ENCODE measurements at regions of chr12 and their contacts with region 1.

Region 1: DNA sequence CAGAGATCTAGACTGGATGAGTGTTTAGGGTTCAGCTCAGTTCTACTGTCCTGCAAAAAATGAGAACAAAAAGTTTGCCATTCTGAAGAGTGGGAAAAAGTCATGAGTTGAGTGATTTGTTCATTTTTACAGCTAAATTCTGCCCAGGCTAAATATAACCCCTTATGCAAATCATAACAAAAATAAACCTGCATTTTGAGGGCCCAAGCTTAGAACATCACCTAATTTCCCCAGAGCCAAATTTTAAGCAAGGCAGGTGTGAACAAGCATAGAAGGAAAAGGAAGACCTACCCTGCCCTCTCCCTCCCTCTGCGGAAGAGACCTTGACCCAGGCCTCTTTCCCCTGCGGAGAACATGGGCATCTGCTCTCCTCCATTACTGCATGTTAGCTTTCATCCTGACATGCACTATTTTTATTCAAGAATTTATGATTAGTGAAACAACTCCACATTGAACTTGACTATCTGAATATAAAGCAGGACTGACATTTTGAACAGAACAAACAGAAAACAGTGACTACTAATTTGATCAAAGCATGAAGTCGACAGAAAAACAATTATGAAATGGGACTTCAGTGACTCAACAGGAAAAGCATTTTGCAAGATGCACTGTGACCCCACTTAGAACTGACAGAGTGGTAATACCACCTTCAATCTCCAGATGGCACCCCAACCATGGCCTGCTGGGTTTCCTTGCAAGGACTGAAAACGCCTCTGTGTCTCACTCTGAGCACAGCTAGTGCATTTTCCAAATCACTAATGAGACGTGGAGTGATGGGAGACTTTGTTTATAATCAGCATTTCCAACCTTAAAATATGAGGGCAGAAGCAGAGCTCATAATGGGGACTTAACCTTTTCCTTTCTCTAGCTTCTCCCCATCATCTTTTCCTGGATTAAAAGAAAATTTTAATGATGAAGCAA is 30.9 kb upstream of the SELPLG start:
- DNase-seq: peak; percentile 94 to 95
- H3K4me3 ChIP-seq: no peak overlapping the region
- CTCF ChIP-seq: peak in 1 of 3 donors; percentile 94
- POLR2A ChIP-seq: no peak

Region 2: GRCh38 chr12:108691175-108691997 is 26.8 kb after region 1 on chr12:
- intact Hi-C with region 1: no loop called
- DNase-seq: peak; percentile 97 to 98
- H3K4me3 ChIP-seq: no peak overlapping the region
- CTCF ChIP-seq: peak in 1 of 3 donors; percentile 86
- POLR2A ChIP-seq: no peak

Region 3: DNA sequence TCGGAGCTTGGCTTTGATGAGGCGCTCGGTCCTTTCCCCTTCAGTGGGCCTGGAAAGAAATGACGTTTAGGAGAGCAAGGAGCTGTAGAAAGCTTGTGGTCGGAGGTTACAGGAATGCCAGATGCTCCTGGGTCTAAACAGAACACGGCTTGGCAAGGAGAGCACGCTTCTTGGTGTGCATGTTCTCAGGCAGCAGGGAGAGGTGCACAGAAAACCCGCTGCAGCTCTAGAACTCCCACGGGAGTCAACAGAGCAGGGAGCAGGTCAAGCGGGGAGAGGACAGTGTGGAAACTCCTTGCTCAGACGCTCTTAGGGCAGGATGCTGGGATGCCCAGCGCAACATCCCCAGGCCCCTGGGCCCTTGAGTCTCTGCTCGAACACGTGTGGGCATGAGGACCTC is 141.7 kb after region 1 on chr12:
- intact Hi-C with region 1: loop called (anchors 2 kb)
- DNase-seq: no peak
- H3K4me3 ChIP-seq: no peak overlapping the region
- CTCF ChIP-seq: no peak
- POLR2A ChIP-seq: no peak